Activated naive CD4-positive, alpha-beta T cell treated with anti-CD3 and anti-CD28 coated beads for 36 hours (primary cell): ENCODE measurements at regions of chr19 and their contacts with region 1.

Region 1: DNA sequence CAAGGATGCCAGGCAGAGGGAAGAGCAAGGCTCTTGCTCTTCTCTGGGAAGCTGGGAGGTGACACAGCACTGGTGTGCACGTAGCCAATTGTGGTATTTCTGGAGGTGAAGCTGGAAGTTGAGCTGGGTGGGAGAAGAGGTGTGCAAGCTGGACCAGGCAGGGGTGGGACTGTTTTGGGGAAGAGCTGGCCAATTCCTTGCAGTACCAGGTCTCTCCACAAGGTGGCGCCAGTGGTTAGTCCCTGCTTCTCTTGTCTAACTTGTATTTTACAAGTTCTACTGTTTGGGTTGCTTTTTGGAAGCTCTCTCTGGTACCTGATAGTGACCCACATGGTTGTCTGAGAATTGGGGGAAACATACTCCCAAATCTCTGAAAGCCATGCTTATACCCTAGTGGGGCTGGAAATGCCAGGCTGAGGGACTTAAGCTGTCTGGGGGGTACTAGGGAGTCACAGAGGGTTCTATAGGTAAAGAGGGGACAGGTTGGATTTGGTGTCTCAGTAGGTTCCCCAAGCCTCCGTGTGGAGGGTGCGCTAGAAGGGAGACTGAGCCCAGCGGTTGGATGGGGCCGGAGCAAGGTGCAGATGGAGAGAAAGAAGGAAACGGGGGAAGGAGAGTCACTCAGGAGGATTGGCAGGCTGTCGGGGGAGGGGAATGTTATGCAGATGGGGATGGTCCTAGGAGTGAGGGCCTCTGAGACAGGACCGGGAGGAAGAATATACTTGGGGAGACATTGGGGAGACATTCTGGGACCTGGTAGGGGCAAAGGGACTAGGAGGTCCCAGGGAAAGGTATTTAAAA is 3.0 kb downstream of the HPN start:
- DNase-seq: peak; percentile 83
- H3K4me3 Mint-ChIP-seq: no peak overlapping the region
- H3K27ac Mint-ChIP-seq: peak overlapping the region; percentile 58
- H3K4me1 Mint-ChIP-seq: peaks cover 39% of the 10 kb centered on the region
- H3K27me3 Mint-ChIP-seq: peaks cover 8% of the 10 kb centered on the region

Region 2: GRCh38 chr19:34808566-34808965 is 236.0 kb before region 1 on chr19:
- CTCF ChIA-PET with region 1: no interaction called
- intact Hi-C with region 1: no loop called
- DNase-seq: no peak
- H3K4me3 Mint-ChIP-seq: no peak overlapping the region
- H3K27ac Mint-ChIP-seq: no peak overlapping the region
- H3K4me1 Mint-ChIP-seq: no peaks in the 10 kb centered on the region
- H3K27me3 Mint-ChIP-seq: no peaks in the 10 kb centered on the region

Region 3: DNA sequence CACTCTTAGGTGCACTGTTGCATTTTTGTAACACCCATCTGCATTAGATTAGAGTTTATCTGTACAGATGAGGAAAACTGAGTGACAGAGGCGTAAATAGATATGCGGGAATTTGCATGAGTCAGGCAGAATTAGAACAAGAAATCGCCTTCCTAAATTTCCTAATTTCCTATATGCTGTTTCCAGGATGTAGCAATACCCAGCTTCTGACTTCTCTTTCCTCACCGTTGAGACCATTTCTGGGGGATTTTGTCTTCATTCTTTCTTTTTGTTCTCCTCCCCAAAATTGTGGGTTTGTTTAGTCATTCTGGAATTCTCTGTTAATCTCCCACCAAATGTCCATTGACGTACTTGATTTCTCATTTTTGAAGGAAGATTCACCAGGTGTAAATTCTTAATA is 69.9 kb before region 1 on chr19:
- CTCF ChIA-PET with region 1: interaction called, 15 read pairs
- intact Hi-C with region 1: no loop called
- DNase-seq: no peak
- H3K4me3 Mint-ChIP-seq: no peak overlapping the region
- H3K27ac Mint-ChIP-seq: no peak overlapping the region
- H3K4me1 Mint-ChIP-seq: peaks cover 24% of the 10 kb centered on the region
- H3K27me3 Mint-ChIP-seq: no peaks in the 10 kb centered on the region

Region 4: DNA sequence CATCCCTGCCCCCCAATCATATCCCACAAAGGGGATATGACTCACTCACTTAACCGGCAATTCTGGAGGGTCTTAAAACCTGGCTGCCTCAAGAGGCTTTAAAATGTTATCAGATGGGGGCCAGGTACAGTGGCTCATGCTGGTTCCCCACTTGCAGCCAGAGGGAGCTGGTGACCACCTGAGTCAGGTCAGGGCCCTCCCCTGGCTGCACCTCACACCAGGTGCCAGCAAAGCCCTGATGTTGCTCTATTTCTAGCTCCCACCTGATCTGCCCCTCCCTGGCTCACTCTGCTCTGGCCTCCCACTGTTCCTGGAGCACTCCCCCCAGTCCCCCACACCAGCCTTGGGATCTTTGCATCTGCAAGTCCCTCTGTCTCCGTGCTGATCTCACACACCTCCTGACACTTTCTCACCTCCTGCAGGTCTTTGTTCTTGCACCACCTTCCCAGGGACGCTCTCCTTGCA is 11.2 kb after region 1 on chr19:
- CTCF ChIA-PET with region 1: interaction called, 17 read pairs
- intact Hi-C with region 1: no loop called
- DNase-seq: peak; percentile 50
- H3K4me3 Mint-ChIP-seq: no peak overlapping the region
- H3K27ac Mint-ChIP-seq: no peak overlapping the region
- H3K4me1 Mint-ChIP-seq: no peaks in the 10 kb centered on the region
- H3K27me3 Mint-ChIP-seq: no peaks in the 10 kb centered on the region

Region 5: GRCh38 chr19:35090506-35091237 is 46.2 kb after region 1 on chr19:
- CTCF ChIA-PET with region 1: interaction called, 23 read pairs
- intact Hi-C with region 1: loop called (anchors 1 kb)
- DNase-seq: peak; percentile 64
- H3K4me3 Mint-ChIP-seq: no peak overlapping the region
- H3K27ac Mint-ChIP-seq: no peak overlapping the region
- H3K4me1 Mint-ChIP-seq: peaks cover 1% of the 10 kb centered on the region
- H3K27me3 Mint-ChIP-seq: peaks cover 5% of the 10 kb centered on the region

Region 6: GRCh38 chr19:35135389-35135909 is 90.9 kb after region 1 on chr19:
- CTCF ChIA-PET with region 1: interaction called, 17 read pairs
- intact Hi-C with region 1: loop called (anchors 1 kb)
- DNase-seq: peak; percentile 79
- H3K4me3 Mint-ChIP-seq: no peak overlapping the region
- H3K27ac Mint-ChIP-seq: no peak overlapping the region
- H3K4me1 Mint-ChIP-seq: no peaks in the 10 kb centered on the region
- H3K27me3 Mint-ChIP-seq: no peaks in the 10 kb centered on the region